GM13977 (cell line): ENCODE measurements at regions of chr9 and their contacts with region 1.

Region 1: GRCh38 chr9:68619636-68620035 is 79.0 kb upstream of the TMEM252 start:
- DNase-seq: no peak
- CTCF ChIP-seq: no peak

Region 2: DNA sequence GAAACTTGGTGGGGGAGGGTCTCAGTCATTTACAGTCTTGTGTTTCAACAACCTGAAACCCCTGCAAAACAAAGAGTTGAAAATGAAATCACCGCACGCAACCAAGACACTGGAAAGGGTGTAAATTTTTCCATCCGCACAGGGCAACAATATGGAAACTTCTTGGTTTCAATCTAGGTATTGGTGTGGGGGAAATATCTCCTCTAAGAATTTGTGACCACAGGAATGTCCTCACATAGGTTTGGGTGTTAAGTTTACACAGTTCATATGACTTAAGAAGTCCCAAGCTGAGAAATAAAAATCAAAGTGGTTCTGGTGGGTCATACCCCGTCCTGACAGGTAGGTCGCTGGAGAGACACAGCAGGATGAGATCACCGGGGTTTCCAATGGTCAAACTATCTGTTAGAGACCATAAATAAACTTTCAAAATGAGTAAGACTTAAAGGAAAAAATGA is 33.5 kb after region 1 on chr9:
- in situ Hi-C with region 1: loop called (anchors 5 kb)
- DNase-seq: peak; percentile 46
- CTCF ChIP-seq: no peak

Region 3: DNA sequence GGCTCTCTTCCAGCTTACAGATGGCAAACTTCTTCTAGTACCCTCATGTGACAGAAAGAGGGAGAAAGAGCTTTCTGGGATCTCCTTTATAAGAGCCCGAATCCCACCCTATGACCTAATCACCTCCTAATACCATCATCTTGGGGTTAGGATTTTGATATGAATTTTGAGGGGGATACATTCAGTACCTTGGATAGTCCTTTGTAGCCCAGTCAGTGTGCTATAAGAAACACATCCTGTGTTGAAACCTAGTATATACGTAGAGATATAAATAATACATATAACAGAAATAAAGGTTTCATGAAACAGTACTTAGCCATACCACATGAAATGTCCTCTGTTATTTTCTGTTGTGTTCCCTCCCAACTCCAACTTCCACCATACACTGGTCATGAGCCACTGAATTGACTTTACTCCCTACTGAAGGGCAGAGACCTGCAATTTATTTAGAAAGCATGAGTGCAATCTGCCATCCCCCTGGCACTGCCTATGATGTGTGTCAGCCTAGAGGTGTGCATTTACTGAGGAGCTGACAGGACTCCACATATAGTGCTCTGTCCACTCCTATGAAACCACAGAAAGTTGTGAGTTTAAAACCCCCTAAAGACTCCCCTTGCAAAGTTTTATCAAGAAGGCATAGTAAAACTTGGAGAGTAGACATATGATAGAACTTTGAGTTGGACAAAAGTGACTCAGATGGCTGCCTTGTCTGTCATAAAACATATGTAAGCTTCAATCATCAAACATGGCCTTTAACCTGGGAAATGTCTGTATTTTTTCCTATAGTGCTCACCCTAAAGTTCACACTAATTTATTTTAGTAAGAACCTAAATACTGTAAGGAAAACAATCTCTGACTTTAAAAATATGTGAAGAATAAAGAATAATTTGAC is 98.2 kb after region 1 on chr9:
- in situ Hi-C with region 1: no loop called
- DNase-seq: no peak
- CTCF ChIP-seq: no peak

Region 4: GRCh38 chr9:70053864-70054263 is 1434.2 kb after region 1 on chr9:
- in situ Hi-C with region 1: no loop called
- DNase-seq: no peak
- CTCF ChIP-seq: no peak